ENCODE measurements at regions of chr7 and their contacts with region 1.

Region 1: DNA sequence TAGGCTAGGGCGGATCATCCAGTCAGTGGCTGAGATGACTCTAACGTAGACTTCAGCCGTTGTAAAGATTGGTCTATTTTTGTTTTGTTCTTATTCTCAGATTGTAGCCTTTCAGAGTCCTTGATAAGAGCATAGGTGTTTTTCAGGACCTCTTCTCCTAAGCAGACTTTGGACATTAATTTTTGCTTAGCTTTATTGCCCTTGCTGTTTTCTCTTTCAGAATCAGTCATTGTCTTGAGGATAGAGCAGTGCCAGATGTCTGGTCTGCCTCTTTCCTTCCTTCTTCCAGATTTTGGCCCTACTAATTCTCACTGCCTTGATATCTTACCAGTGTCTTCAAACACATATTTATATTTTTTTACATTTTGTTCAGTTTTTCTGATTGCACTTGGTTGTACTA is 49.5 kb downstream of the C1GALT1 start:
- DNase-seq: no peak
- H3K4me3 ChIP-seq: no peak overlapping the region
- H3K27ac ChIP-seq: no peak overlapping the region
- H3K4me1 ChIP-seq: 0 out of 2 replicates have a peak, but pooled peaks cover 5% of the 10 kb centered on the region
- H3K27me3 ChIP-seq: no peaks in the 10 kb centered on the region
- CTCF ChIP-seq: no peak

Region 2: DNA sequence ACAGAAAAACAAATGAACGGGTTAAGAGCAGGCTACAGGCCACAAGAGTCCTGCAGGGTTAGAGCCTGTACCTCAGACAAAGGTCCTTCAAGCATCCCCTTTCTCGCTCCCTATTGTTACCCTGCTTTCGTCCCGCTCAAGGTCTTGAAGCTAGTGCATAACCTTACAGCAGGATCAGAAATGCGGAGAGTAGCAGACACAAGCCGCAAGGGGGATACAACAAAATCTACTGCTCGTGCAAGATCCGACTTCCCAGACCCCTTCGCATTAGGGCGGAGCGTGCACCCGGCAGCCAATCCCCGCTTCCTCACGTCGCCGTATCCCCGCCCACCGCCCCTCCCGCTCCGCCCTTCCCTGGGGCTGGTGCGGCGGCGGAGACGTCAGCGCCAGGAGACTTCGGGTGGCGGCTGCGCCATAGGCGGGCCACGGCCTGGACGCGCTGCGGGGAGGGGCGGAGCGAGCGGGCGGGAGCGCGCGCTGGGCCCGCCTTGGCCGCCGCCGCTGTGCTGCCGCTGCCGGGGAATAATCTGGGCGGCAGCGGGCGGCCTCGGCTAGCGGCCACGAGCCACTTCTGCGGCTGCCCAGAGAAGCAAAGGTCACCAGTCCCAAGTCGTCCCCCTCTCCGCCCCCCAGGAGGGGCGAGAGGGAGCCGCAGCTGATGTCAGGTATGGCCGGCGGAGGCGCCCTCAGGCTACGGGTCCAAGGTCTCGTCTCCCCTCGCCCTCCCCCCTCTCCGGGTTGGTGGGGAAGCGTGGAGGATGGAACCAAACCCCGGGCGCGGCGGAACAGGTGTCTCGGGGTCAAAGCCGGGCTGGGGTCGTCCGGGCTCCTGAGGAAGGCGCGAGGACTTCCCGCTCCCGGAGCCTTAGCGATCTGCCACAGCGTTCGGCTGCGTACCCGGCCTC is 49.5 kb before region 1 on chr7 and contains the start of gene C1GALT1:
- CTCF ChIA-PET with region 1: no interaction called
- POLR2A ChIA-PET with region 1: no interaction called
- intact Hi-C with region 1: no loop called
- DNase-seq: peak; percentile 95 to 99
- H3K4me3 ChIP-seq: peak within 1 kb of the TSS; percentile 67
- H3K27ac ChIP-seq: peak within 1 kb of the TSS; percentile 88
- H3K4me1 ChIP-seq: peaks cover 42% of the 10 kb centered on the region
- H3K27me3 ChIP-seq: no peaks in the 10 kb centered on the region
- CTCF ChIP-seq: peak; percentile 43; the same call in 1 of the 2 replicates
- total RNA-seq, gene C1GALT1: 44.7 and 54.2 TPM in 2 replicates

Region 3: DNA sequence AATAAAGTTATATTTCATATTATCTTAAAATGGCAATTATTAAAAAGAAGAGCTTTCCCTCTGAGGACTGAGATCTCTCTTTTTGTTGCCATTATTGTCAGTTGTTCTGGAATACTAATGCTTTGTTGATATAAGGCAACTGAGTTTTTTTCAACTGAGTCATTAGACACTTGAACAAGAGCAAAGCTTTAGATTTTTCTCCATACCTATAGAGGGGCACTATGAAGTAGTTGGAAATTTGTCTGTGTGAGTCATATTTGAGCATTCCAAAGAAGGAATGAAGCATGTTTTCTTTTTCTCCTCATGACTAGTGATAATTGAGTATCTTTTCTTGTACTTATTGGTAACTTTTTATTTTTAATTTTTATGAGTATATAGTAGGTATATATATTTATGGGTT is 462.0 kb after region 1 on chr7:
- CTCF ChIA-PET with region 1: no interaction called
- POLR2A ChIA-PET with region 1: interaction called, 13 read pairs
- intact Hi-C with region 1: no loop called
- DNase-seq: peak in 1 of 2 experiments; percentile 87
- H3K4me3 ChIP-seq: no peak overlapping the region
- H3K27ac ChIP-seq: peak overlapping the region; percentile 33; the same call in 1 of the 2 replicates
- H3K4me1 ChIP-seq: peaks cover 26% of the 10 kb centered on the region
- H3K27me3 ChIP-seq: no peaks in the 10 kb centered on the region
- CTCF ChIP-seq: no peak

Measured in PC-9 (cell line).